RWPE1 (cell line): ENCODE measurements at regions of chr20 and their contacts with region 1.

Region 1: GRCh38 chr20:64038565-64039292 is 2.7 kb downstream of the C20orf204 start:
- DNase-seq: peak; percentile 88
- H3K27ac ChIP-seq: peak overlapping the region; percentile 58
- CTCF ChIP-seq: peak; percentile 97

Region 2: DNA sequence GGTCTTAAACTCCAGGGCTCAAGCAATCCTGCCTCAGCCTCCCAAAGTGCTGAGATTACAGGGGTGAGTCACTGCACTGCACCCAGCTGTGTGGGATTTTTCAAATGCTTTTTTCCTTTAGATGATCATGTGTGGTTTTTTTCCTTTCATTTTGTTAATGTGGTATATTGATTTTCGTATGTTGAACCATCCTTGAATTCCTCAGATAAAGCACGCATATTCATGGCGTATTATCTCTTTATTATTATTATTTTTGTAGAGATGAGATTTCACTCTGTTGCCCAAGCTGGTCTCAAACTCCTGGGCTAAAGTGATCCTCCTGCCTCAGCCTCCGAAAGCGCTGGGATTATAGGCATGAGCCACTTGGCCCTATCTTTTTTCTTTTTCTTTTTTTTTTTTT is 323.9 kb before region 1 on chr20:
- CTCF ChIA-PET with region 1: no interaction called
- POLR2A ChIA-PET with region 1: no interaction called
- DNase-seq: no peak
- H3K27ac ChIP-seq: no peak overlapping the region
- CTCF ChIP-seq: no peak

Region 3: GRCh38 chr20:63973636-63974402 is 64.9 kb before region 1 on chr20:
- CTCF ChIA-PET with region 1: interaction called, 11 read pairs
- POLR2A ChIA-PET with region 1: no interaction called
- DNase-seq: peak; percentile 86
- H3K27ac ChIP-seq: peak overlapping the region; percentile 62
- CTCF ChIP-seq: peak; percentile 100

Region 4: GRCh38 chr20:64006902-64007301 is 31.8 kb before region 1 on chr20:
- CTCF ChIA-PET with region 1: interaction called, 12 read pairs
- POLR2A ChIA-PET with region 1: interaction called, 3 read pairs
- DNase-seq: no peak
- H3K27ac ChIP-seq: no peak overlapping the region
- CTCF ChIP-seq: no peak

Region 5: DNA sequence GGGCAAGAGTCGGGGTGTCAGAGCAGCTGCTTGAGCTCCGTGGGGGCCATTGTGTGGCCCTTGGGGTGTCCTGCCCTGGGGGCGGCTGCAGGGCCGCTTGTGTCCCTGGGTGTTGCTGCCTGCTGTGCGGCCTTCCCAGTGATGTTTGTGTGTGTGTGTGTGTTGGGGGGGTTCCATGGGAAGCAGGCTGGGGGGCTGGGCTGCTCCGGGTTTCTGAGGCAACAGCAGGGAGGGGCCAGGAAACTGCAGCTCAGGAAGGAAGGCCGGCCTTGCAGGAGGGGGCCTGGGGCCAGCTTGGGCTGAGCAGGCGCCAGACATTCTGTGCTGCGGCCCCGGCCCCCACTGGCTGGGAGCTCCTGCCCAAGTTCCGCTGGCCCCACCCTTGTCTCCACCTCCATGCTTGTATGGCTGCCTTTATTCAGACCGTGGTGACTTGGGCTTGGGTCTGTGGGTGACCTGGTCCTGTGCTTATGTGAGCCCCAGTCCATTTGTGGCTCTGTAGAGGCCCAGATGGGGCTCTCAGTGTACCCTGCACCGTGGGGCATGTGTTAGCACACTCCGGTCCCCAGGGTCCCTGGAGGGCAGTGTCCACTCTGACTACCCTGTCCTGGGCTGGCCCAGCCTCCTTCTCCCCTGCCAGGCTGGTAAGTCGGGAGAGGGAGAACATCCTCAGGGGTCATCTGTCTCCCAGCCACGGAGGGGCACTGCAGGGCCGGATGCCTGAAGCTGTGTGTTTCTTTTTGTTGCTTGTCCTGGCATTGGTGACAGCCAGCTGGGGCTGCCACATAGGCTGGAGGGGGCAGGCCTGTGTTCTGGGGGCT is 15.3 kb after region 1 on chr20:
- CTCF ChIA-PET with region 1: interaction called, 98 read pairs
- POLR2A ChIA-PET with region 1: no interaction called
- DNase-seq: no peak
- H3K27ac ChIP-seq: peak overlapping the region; percentile 53
- CTCF ChIP-seq: no peak; the same call in 1 of the 2 replicates

Region 6: GRCh38 chr20:64069614-64070243 is 31.0 kb after region 1 on chr20:
- CTCF ChIA-PET with region 1: interaction called, 28 read pairs
- POLR2A ChIA-PET with region 1: interaction called, 3 read pairs
- DNase-seq: peak; percentile 72
- H3K27ac ChIP-seq: no peak overlapping the region
- CTCF ChIP-seq: peak; percentile 95

Region 7: GRCh38 chr20:64119681-64120341 is 81.1 kb after region 1 on chr20:
- CTCF ChIA-PET with region 1: interaction called, 53 read pairs
- POLR2A ChIA-PET with region 1: no interaction called
- DNase-seq: no peak
- H3K27ac ChIP-seq: no peak overlapping the region; the same call in 1 of the 2 replicates
- CTCF ChIP-seq: no peak